ENCODE measurements at regions of chr1 and their contacts with region 1.

Region 1: GRCh38 chr1:35769759-35770446 is at the start of gene CLSPN:
- DNase-seq: peak; percentile 95
- ATAC-seq: peak; percentile 99
- total RNA-seq, gene CLSPN: 0.40 TPM

Region 2: DNA sequence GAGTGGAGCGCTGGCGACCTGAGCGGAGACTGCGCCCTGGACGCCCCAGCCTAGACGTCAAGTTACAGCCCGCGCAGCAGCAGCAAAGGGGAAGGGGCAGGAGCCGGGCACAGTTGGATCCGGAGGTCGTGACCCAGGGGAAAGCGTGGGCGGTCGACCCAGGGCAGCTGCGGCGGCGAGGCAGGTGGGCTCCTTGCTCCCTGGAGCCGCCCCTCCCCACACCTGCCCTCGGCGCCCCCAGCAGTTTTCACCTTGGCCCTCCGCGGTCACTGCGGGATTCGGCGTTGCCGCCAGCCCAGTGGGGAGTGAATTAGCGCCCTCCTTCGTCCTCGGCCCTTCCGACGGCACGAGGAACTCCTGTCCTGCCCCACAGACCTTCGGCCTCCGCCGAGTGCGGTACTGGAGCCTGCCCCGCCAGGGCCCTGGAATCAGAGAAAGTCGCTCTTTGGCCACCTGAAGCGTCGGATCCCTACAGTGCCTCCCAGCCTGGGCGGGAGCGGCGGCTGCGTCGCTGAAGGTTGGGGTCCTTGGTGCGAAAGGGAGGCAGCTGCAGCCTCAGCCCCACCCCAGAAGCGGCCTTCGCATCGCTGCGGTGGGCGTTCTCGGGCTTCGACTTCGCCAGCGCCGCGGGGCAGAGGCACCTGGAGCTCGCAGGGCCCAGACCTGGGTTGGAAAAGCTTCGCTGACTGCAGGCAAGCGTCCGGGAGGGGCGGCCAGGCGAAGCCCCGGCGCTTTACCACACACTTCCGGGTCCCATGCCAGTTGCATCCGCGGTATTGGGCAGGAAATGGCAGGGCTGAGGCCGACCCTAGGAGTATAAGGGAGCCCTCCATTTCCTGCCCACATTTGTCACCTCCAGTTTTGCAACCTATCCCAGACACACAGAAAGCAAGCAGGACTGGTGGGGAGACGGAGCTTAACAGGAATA is 192.6 kb before region 1 on chr1:
- intact Hi-C with region 1: loop called (anchors 10 kb)
- DNase-seq: no peak
- ATAC-seq: peak; percentile 78

Region 3: GRCh38 chr1:35707601-35708440 is 62.1 kb before region 1 on chr1:
- intact Hi-C with region 1: no loop called
- DNase-seq: no peak
- ATAC-seq: peak; percentile 66